Motor neuron (in vitro differentiated cells): ENCODE measurements at regions of chr3 and their contacts with region 1.

Region 1: DNA sequence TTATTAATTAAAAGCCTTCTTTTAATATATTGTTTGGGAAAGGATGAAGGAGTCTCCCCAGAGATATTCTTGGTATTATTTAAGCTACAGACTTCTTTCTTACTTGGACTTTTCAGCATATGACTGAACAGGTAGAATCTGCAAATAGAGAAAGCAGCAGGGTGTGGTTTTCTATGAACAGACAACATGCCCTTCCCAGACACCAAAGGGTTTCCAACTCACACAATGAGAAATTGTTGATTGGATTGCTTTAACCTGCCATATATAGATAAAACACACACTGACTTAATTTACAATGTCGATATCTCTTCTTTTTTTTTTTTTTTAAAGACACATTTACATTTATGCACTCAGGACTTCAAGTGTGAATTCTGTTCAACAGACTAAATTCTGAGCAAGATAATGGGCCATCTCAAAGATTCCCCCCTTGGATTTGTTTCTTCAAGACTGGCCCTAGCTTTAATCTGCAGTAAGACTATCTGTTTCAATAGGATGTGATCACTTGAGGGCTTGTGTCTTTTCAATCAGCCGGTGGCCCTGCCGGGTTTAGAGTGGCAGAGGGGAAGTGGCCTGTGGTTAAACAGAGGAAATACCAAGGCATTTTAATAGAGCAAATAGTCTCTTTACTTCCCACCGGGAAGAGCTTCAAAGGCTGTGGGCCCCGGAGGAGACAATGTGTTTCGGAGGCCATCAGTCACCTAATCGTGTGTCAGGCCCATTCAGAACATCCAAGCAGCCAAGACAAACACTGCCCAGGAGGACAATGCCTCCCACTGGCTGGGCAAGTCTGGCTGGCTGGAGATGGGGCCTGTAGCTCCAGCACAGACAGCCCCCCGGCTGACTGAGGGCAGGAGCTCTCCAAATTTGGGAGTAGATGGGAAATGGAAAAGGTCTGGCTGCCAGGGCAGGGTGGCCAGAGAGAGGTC is 6.1 kb downstream of the IL17RD start:
- ATAC-seq: peak in 4 of 8 experiments; percentile 21 to 59 (median 28)
- H3K4me3 ChIP-seq: no peak overlapping the region
- H3K27ac ChIP-seq: no peak overlapping the region
- H3K4me1 ChIP-seq: peaks cover 25 to 31% of the 10 kb centered on the region in 2 donors

Region 2: GRCh38 chr3:57120040-57120439 is 39.0 kb before region 1 on chr3:
- in situ Hi-C with region 1: loop called in 1 of 9 experiments (anchors 5 kb)
- ATAC-seq: no peak
- H3K4me3 ChIP-seq: no peak overlapping the region
- H3K27ac ChIP-seq: no peak overlapping the region
- H3K4me1 ChIP-seq: no peaks in the 10 kb centered on the region